ENCODE measurements at regions of chr18 and their contacts with region 1.

Region 1: GRCh38 chr18:74342416-74343043 is 26.9 kb downstream of the C18orf63 start:
- DNase-seq: peak; percentile 58
- ATAC-seq: no peak
- H3K4me3 ChIP-seq: no peak overlapping the region
- H3K27ac ChIP-seq: no peak overlapping the region
- H3K4me1 ChIP-seq: no peaks in the 10 kb centered on the region
- H3K27me3 ChIP-seq: no peaks in the 10 kb centered on the region; a peak in 1 of 5 replicates
- CTCF ChIP-seq: peak; percentile 70
- EP300 ChIP-seq: no peak
- POLR2A ChIP-seq: no peak
- RAD21 ChIP-seq: peak; percentile 69

Region 2: GRCh38 chr18:73980289-73980979 is 362.1 kb before region 1 on chr18:
- CTCF ChIA-PET with region 1: no interaction called
- POLR2A ChIA-PET with region 1: no interaction called
- in situ Hi-C with region 1: no loop called
- intact Hi-C with region 1: loop called (anchors 5 kb)
- DNase-seq: peak; percentile 9
- ATAC-seq: peak; percentile 83
- H3K4me3 ChIP-seq: no peak overlapping the region
- H3K27ac ChIP-seq: no peak overlapping the region
- H3K4me1 ChIP-seq: no peaks in the 10 kb centered on the region
- H3K27me3 ChIP-seq: peaks cover 0 to 20% of the 10 kb centered on the region in 2 experiments; a peak in 2 of 5 replicates
- CTCF ChIP-seq: peak; percentile 55
- EP300 ChIP-seq: no peak
- POLR2A ChIP-seq: no peak
- RAD21 ChIP-seq: no peak

Region 3: GRCh38 chr18:74040459-74041332 is 301.8 kb before region 1 on chr18:
- CTCF ChIA-PET with region 1: interaction called, 4 read pairs
- POLR2A ChIA-PET with region 1: no interaction called
- in situ Hi-C with region 1: no loop called
- intact Hi-C with region 1: loop called (anchors 1 kb)
- DNase-seq: peak; percentile 28
- ATAC-seq: peak; percentile 100
- H3K4me3 ChIP-seq: no peak overlapping the region
- H3K27ac ChIP-seq: no peak overlapping the region
- H3K4me1 ChIP-seq: no peaks in the 10 kb centered on the region
- H3K27me3 ChIP-seq: no peaks in the 10 kb centered on the region
- CTCF ChIP-seq: peak; percentile 84
- EP300 ChIP-seq: no peak
- POLR2A ChIP-seq: no peak
- RAD21 ChIP-seq: no peak; the same call in 1 of the 2 replicates

Region 4: GRCh38 chr18:74081966-74082741 is 260.4 kb before region 1 on chr18:
- CTCF ChIA-PET with region 1: interaction called, 21 read pairs
- POLR2A ChIA-PET with region 1: no interaction called
- in situ Hi-C with region 1: no loop called
- intact Hi-C with region 1: loop called (anchors 1 kb)
- DNase-seq: peak; percentile 65
- ATAC-seq: peak; percentile 100
- H3K4me3 ChIP-seq: peak overlapping the region in 2 of 3 experiments; percentile 6 to 21; a peak in 4 of 6 replicates
- H3K27ac ChIP-seq: no peak overlapping the region
- H3K4me1 ChIP-seq: peaks cover 12% of the 10 kb centered on the region; the same call in 1 of the 2 replicates
- H3K27me3 ChIP-seq: peaks cover 0 to 38% of the 10 kb centered on the region in 2 experiments
- CTCF ChIP-seq: peak; percentile 87
- EP300 ChIP-seq: no peak
- POLR2A ChIP-seq: no peak
- RAD21 ChIP-seq: peak; percentile 71

Region 5: DNA sequence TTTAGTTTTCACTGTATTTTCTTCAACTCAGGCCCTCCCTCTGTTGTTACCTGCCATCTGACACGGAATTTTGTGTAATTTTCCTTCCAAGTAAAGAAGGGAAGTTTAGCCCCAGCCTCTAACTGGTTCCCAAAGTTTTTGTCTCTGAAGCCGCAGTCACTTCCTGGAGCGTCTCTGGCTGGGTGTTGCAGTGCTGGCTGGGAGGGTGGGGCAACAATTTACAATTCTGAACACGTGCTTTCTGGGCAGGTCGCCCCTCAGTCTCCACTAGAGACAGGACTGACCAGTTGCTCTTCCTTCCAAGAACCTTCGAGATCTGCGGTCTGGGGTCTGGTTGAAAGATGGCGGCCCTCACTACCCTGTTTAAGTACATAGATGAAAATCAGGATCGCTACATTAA is 157.1 kb after region 1 on chr18:
- CTCF ChIA-PET with region 1: no interaction called
- POLR2A ChIA-PET with region 1: no interaction called
- in situ Hi-C with region 1: no loop called
- intact Hi-C with region 1: no loop called
- DNase-seq: no peak
- ATAC-seq: no peak
- H3K4me3 ChIP-seq: no peak overlapping the region
- H3K27ac ChIP-seq: no peak overlapping the region
- H3K4me1 ChIP-seq: peaks cover 34% of the 10 kb centered on the region
- H3K27me3 ChIP-seq: no peaks in the 10 kb centered on the region; a peak in 1 of 5 replicates
- CTCF ChIP-seq: no peak
- EP300 ChIP-seq: no peak
- POLR2A ChIP-seq: no peak
- RAD21 ChIP-seq: no peak